ENCODE measurements at regions of chr15 and their contacts with region 1.

Region 1: GRCh38 chr15:56491110-56491722 is 26.3 kb upstream of the MNS1 start:
- DNase-seq: peak; percentile 83
- H3K4me3 Mint-ChIP-seq: no peak overlapping the region
- H3K27ac Mint-ChIP-seq: no peak overlapping the region
- H3K4me1 Mint-ChIP-seq: peaks cover 31% of the 10 kb centered on the region
- H3K27me3 Mint-ChIP-seq: no peaks in the 10 kb centered on the region
- CTCF ChIP-seq: peak; percentile 79

Region 2: DNA sequence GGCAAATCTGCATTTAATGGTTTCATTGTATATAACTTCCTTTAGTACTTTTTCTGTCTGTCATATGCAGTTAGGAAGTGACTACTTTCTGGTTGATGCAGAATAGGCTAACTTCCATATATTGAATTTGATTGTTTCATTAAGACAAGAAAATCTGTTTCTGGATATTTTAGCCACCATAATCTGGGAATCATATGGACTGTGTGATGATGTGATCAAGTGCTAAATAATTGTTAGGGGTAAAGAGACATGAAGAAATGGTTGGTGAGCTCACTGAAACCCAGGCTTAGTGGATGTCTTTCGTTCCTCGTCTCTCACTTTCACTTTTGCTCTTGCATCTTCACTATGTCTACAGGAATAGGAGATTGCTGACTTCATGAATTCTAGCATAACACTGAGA is 22.8 kb before region 1 on chr15:
- CTCF ChIA-PET with region 1: interaction called, 14 read pairs
- intact Hi-C with region 1: no loop called
- DNase-seq: no peak
- H3K4me3 Mint-ChIP-seq: peak overlapping the region; percentile 55
- H3K27ac Mint-ChIP-seq: peak overlapping the region; percentile 67
- H3K4me1 Mint-ChIP-seq: peaks cover 31% of the 10 kb centered on the region
- H3K27me3 Mint-ChIP-seq: no peaks in the 10 kb centered on the region
- CTCF ChIP-seq: no peak

Region 3: GRCh38 chr15:56683908-56684307 is 192.7 kb after region 1 on chr15:
- CTCF ChIA-PET with region 1: no interaction called
- intact Hi-C with region 1: loop called (anchors 10 kb)
- DNase-seq: no peak
- H3K4me3 Mint-ChIP-seq: no peak overlapping the region
- H3K27ac Mint-ChIP-seq: no peak overlapping the region
- H3K4me1 Mint-ChIP-seq: no peaks in the 10 kb centered on the region
- H3K27me3 Mint-ChIP-seq: no peaks in the 10 kb centered on the region
- CTCF ChIP-seq: no peak

Region 4: GRCh38 chr15:56732921-56733797 is 241.9 kb after region 1 on chr15 and contains the start of gene ZNF280D:
- CTCF ChIA-PET with region 1: no interaction called
- intact Hi-C with region 1: loop called (anchors 10 kb)
- DNase-seq: peak; percentile 88
- H3K4me3 Mint-ChIP-seq: peak within 1 kb of the TSS; percentile 93
- H3K27ac Mint-ChIP-seq: peak within 1 kb of the TSS; percentile 94
- H3K4me1 Mint-ChIP-seq: peaks cover 9% of the 10 kb centered on the region
- H3K27me3 Mint-ChIP-seq: no peaks in the 10 kb centered on the region
- CTCF ChIP-seq: no peak
- total RNA-seq, gene ZNF280D: 36.0 and 40.3 TPM in 2 replicates

Region 5: GRCh38 chr15:56869573-56869972 is 378.4 kb after region 1 on chr15:
- CTCF ChIA-PET with region 1: interaction called, 10 read pairs
- intact Hi-C with region 1: loop called (anchors 2 kb)
- DNase-seq: peak; percentile 65
- H3K4me3 Mint-ChIP-seq: no peak overlapping the region
- H3K27ac Mint-ChIP-seq: no peak overlapping the region
- H3K4me1 Mint-ChIP-seq: peaks cover 33% of the 10 kb centered on the region
- H3K27me3 Mint-ChIP-seq: no peaks in the 10 kb centered on the region
- CTCF ChIP-seq: peak; percentile 46

Region 6: DNA sequence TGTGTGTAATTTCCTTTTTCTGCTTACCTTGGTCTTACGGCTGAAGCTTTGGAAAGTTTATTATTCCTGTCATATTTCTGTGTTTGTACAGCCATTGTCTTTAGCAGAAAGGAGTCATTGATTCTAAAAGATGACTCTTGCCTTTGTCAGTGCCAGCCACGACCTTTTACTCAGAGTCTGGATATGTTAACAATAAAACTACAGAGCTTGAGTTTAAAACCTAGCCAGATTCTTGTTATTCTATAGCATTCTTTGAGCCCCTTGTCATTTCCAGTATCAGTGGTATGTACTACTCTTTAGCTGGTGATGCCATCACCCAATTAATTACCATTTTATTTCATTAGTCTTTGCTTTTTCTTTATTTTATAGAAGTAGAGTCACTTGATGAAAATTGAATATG is 569.6 kb after region 1 on chr15:
- CTCF ChIA-PET with region 1: no interaction called
- intact Hi-C with region 1: loop called (anchors 10 kb)
- DNase-seq: peak; percentile 33
- H3K4me3 Mint-ChIP-seq: peak overlapping the region; percentile 20
- H3K27ac Mint-ChIP-seq: peak overlapping the region; percentile 82
- H3K4me1 Mint-ChIP-seq: peaks cover 65% of the 10 kb centered on the region
- H3K27me3 Mint-ChIP-seq: no peaks in the 10 kb centered on the region
- CTCF ChIP-seq: no peak

Region 7: GRCh38 chr15:57340682-57341259 is 849.6 kb after region 1 on chr15:
- CTCF ChIA-PET with region 1: no interaction called
- intact Hi-C with region 1: loop called (anchors 10 kb)
- DNase-seq: peak; percentile 76
- H3K4me3 Mint-ChIP-seq: no peak overlapping the region
- H3K27ac Mint-ChIP-seq: no peak overlapping the region
- H3K4me1 Mint-ChIP-seq: peaks cover 25% of the 10 kb centered on the region
- H3K27me3 Mint-ChIP-seq: no peaks in the 10 kb centered on the region
- CTCF ChIP-seq: peak; percentile 86